ENCODE measurements at regions of chr2 and their contacts with region 1.

Region 1: DNA sequence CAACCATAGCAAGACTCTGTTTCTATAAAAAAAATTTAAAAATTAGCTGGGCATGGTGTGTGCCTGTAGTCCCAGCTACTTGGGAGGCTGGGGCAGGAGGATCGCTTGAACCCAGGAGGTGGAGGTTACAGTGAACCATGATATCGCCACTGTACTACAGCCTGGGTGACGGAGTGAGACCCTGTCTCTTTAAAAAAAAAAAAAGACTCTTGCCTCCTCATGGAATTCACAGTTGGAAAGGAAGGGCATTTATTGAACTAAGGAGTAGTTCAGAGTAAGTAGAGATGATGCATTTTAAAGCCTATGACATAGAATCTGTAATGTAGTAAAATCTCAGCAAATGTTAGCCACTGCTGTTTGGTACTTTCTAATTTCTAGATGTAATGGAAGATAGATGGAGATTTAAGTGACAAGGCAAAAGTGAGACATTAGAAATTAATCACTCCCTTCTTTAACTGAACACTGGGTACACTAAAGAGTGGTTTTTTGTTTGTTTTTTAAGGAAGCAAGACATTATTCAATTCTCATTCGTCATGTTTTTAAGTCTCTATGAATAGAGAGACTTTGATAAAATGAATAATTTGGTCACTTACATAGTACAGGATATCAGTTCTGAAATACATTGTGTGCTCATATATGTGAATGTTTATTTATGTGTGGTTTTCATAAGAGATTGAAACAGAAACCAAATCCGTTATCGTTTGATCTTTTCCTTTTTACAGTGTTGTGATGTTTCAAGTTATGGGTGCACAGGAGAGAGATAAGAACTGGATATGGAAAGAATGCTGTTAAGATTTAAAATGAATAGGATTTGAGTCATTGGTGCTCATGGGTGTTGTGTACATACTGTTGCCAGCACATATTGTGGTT is 186.1 kb upstream of the STON1 start:
- DNase-seq: no peak
- ATAC-seq: peak; percentile 89
- H3K4me3 ChIP-seq: peak overlapping the region; percentile 19; the same call in 1 of the 2 replicates
- H3K27ac ChIP-seq: peak overlapping the region; percentile 35
- H3K4me1 ChIP-seq: no peaks in the 10 kb centered on the region
- H3K27me3 ChIP-seq: no peaks in the 10 kb centered on the region
- CTCF ChIP-seq: no peak
- EP300 ChIP-seq: no peak
- POLR2A ChIP-seq: no peak
- RAD21 ChIP-seq: no peak

Region 2: GRCh38 chr2:48205137-48205798 is 138.5 kb before region 1 on chr2:
- CTCF ChIA-PET with region 1: no interaction called
- POLR2A ChIA-PET with region 1: no interaction called
- RAD21 ChIA-PET with region 1: no interaction called
- SMC1A ChIA-PET with region 1: no interaction called
- in situ Hi-C with region 1: no loop called
- intact Hi-C with region 1: no loop called
- DNase-seq: peak; percentile 48
- ATAC-seq: peak; percentile 85
- H3K4me3 ChIP-seq: no peak overlapping the region
- H3K27ac ChIP-seq: no peak overlapping the region
- H3K4me1 ChIP-seq: peaks cover 3% of the 10 kb centered on the region; the same call in 1 of the 2 replicates
- H3K27me3 ChIP-seq: no peaks in the 10 kb centered on the region
- CTCF ChIP-seq: peak in 2 of 3 experiments; percentile 33 to 52; a peak in 2 of 6 replicates
- EP300 ChIP-seq: no peak
- POLR2A ChIP-seq: no peak
- RAD21 ChIP-seq: peak; percentile 17; the same call in 1 of the 2 replicates

Region 3: DNA sequence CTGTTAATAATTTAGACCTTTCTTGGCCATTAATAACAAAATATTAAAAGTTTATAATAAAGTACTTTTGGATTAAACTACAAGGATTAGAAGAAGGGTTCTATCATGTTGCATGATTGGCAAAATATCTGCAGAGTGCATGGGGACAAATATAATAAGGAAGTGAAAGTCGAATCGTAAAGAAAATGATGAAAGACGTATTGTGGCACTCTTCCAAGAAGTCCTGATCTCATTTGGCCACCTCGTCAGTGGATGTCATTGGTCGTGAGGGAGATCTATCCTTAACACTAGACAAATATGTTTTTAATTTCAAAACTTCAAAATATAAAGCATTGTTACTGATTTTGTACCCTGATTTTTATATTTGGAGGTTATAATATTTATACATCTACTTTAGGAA is 11.5 kb before region 1 on chr2:
- CTCF ChIA-PET with region 1: interaction called, 18 read pairs
- POLR2A ChIA-PET with region 1: interaction called, 7 read pairs
- RAD21 ChIA-PET with region 1: interaction called, 6 read pairs
- SMC1A ChIA-PET with region 1: interaction called, 20 read pairs
- in situ Hi-C with region 1: no loop called
- intact Hi-C with region 1: no loop called
- DNase-seq: no peak
- ATAC-seq: peak; percentile 82
- H3K4me3 ChIP-seq: no peak overlapping the region
- H3K27ac ChIP-seq: no peak overlapping the region; the same call in 1 of the 2 replicates
- H3K4me1 ChIP-seq: peaks cover 12% of the 10 kb centered on the region
- H3K27me3 ChIP-seq: no peaks in the 10 kb centered on the region
- CTCF ChIP-seq: no peak
- EP300 ChIP-seq: peak in 1 of 2 experiments; percentile 60; a peak in 1 of 4 replicates
- POLR2A ChIP-seq: no peak
- RAD21 ChIP-seq: no peak

Region 4: DNA sequence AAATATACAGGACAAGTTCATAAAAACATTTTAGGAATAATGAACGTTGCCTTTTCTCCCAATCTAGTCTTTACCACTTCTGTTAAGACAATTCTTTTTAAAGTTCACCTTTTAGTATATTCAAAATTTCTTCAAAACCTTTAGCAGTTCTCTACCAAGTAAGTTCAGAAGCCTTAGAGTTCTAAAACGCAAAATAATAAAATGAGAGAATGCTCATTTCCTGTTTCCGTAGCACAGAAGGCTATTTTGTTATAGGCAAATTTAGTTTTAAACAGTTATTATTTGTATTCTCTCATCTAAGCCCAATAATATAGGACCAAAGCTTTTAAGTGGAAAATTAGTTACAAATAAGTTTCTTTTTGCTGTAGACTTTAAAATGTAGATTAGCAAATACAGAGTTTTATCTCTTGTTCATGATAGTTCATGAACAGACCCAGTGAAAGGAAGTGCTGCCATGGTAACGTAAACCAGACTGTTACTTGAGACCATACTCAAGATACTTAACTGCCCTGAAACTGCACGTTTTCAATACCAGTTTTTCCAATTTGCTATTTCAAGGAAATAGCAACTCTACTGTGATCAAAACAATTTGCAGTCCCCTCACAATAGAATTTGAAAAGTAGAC is 13.0 kb after region 1 on chr2:
- CTCF ChIA-PET with region 1: interaction called, 4 read pairs
- POLR2A ChIA-PET with region 1: no interaction called
- RAD21 ChIA-PET with region 1: interaction called, 3 read pairs
- SMC1A ChIA-PET with region 1: interaction called, 20 read pairs
- in situ Hi-C with region 1: no loop called
- intact Hi-C with region 1: no loop called
- DNase-seq: no peak
- ATAC-seq: peak; percentile 79
- H3K4me3 ChIP-seq: peak overlapping the region; percentile 26; the same call in 1 of the 2 replicates
- H3K27ac ChIP-seq: peak overlapping the region; percentile 41; the same call in 1 of the 2 replicates
- H3K4me1 ChIP-seq: peaks cover 15% of the 10 kb centered on the region
- H3K27me3 ChIP-seq: no peaks in the 10 kb centered on the region
- CTCF ChIP-seq: no peak
- EP300 ChIP-seq: no peak
- POLR2A ChIP-seq: no peak
- RAD21 ChIP-seq: no peak

Region 5: GRCh38 chr2:48362515-48362914 is 18.7 kb after region 1 on chr2:
- CTCF ChIA-PET with region 1: interaction called, 3 read pairs
- POLR2A ChIA-PET with region 1: interaction called, 3 read pairs
- RAD21 ChIA-PET with region 1: interaction called, 3 read pairs
- SMC1A ChIA-PET with region 1: interaction called, 12 read pairs
- in situ Hi-C with region 1: no loop called
- intact Hi-C with region 1: no loop called
- DNase-seq: no peak
- ATAC-seq: peak; percentile 48
- H3K4me3 ChIP-seq: no peak overlapping the region
- H3K27ac ChIP-seq: no peak overlapping the region
- H3K4me1 ChIP-seq: no peaks in the 10 kb centered on the region
- H3K27me3 ChIP-seq: no peaks in the 10 kb centered on the region
- CTCF ChIP-seq: no peak
- EP300 ChIP-seq: no peak
- POLR2A ChIP-seq: no peak
- RAD21 ChIP-seq: no peak

Measured in GM12878 (cell line).